H1 (cell line): ENCODE measurements at regions of chr12 and their contacts with region 1.

Region 1: DNA sequence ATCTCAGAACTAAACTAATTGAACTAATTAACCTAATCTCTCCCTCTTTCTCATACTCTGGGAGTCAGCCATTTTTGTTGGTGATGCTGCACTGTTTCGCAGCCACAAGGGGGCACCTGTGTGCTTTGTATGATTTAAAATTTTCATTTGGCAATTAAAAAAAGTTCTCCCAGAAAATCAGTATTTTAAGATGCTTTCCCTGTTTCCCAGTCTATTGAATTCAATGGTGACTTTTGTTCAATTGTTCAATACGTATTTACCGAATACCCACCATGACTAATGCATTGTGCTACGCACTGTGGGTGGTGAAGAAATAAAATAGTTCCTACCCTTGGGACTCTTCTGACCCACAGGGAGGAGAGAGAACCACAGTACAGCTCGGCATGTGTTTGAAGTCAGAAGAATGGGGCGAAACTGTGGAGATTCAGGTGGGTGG is 63.7 kb downstream of the ZNF664 start:
- DNase-seq: peak in 1 of 2 experiments; percentile 61
- H3K4me3 ChIP-seq: no peak overlapping the region
- H3K27ac ChIP-seq: no peak overlapping the region
- H3K4me1 ChIP-seq: peaks cover 0 to 7% (median 0%) of the 10 kb centered on the region in 4 experiments; a peak in 2 of 7 replicates
- H3K27me3 ChIP-seq: no peaks in the 10 kb centered on the region
- CTCF ChIP-seq: peak; percentile 58 to 80 (median 67); a peak in 3 of 4 replicates
- EP300 ChIP-seq: no peak
- POLR2A ChIP-seq: no peak
- RAD21 ChIP-seq: peak; percentile 89 to 90

Region 2: GRCh38 chr12:123897221-123897620 is 139.5 kb before region 1 on chr12:
- CTCF ChIA-PET with region 1: no interaction called
- POLR2A ChIA-PET with region 1: no interaction called
- DNase-seq: no peak
- H3K4me3 ChIP-seq: no peak overlapping the region
- H3K27ac ChIP-seq: no peak overlapping the region
- H3K4me1 ChIP-seq: peaks cover 0 to 7% (median 4%) of the 10 kb centered on the region in 4 experiments; a peak in 3 of 7 replicates
- H3K27me3 ChIP-seq: 0 out of 7 replicates have a peak, but pooled peaks cover 0 to 5% (median 0%) of the 10 kb centered on the region in 4 experiments
- CTCF ChIP-seq: no peak
- EP300 ChIP-seq: no peak
- POLR2A ChIP-seq: no peak
- RAD21 ChIP-seq: no peak

Region 3: DNA sequence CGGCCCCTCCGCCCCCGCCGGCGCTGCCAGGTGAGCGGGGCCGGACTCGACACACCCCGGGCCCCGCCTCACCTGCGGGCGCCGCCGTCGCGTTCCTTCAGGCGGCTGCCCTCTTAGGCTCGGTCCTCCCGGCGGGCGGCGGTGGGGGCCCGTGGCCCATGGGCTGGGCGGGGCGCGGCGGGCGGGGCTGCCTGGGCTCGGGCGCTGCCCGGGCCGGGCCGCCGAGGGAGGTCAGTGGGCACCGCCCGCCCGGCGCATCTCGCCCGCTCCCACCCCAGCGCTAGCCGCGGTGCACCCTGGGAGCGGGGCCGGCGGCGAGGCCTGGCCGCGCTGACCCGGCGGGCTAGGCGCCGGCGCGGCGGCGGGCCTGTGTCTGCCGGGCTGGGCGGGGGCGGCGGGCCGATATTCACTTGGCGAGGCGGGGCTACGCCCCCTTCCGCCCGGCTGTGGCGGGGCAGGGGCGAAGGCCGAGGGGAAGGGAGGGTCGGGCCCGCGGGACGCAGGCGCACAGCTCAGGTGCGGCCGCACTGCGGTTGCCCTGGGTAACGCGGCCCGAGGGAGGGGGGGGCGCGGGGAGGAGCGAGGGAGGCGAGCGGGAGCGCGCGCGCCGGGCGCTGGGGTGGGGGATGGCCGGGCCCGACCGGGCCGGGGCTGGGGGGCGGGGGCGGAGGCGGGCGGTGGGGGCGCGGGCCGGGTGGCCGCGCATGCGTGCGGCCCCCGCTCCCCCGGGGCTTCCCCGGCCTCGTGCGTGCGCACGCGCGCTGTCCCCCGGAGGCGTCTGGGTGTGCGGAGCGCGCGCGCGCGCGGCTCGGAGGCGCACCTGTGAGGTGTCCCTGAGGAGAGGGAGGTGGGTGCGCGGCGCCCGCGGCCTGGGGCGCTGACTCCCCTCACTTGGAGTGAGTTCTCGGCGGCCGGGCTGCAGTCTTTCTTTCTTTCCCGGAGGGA is 64.0 kb before region 1 on chr12 and contains the starts of genes CCDC92 and ZNF664:
- CTCF ChIA-PET with region 1: no interaction called
- POLR2A ChIA-PET with region 1: no interaction called
- DNase-seq: peak; percentile 82 to 94
- H3K4me3 ChIP-seq: peak within 1 kb of the TSS; percentile 57 to 86 (median 70)
- H3K27ac ChIP-seq: no peak within 1 kb of the TSS; the same call in 1 of the 2 replicates
- H3K4me1 ChIP-seq: peaks cover 3 to 8% (median 5%) of the 10 kb centered on the region in 4 experiments; a peak in 6 of 7 replicates
- H3K27me3 ChIP-seq: peaks cover 35 to 60% (median 52%) of the 10 kb centered on the region in 4 experiments
- CTCF ChIP-seq: peak; percentile 34 to 36 (median 35); a peak in 2 of 4 replicates
- EP300 ChIP-seq: no peak
- POLR2A ChIP-seq: peak in 1 of 2 experiments; percentile 48; a peak in 2 of 3 replicates
- RAD21 ChIP-seq: no peak; a peak in 1 of 4 replicates
- total RNA-seq, gene CCDC92: 0.43 and 0.73 TPM in 2 replicates
- total RNA-seq, gene ZNF664: 41.7 and 51.4 TPM in 2 replicates

Region 4: GRCh38 chr12:124053851-124054250 is 17.2 kb after region 1 on chr12:
- CTCF ChIA-PET with region 1: interaction called, 29 read pairs
- POLR2A ChIA-PET with region 1: no interaction called
- DNase-seq: peak; percentile 61 to 63
- H3K4me3 ChIP-seq: no peak overlapping the region
- H3K27ac ChIP-seq: no peak overlapping the region
- H3K4me1 ChIP-seq: no peaks in the 10 kb centered on the region
- H3K27me3 ChIP-seq: no peaks in the 10 kb centered on the region
- CTCF ChIP-seq: peak; percentile 75 to 83 (median 80)
- EP300 ChIP-seq: no peak
- POLR2A ChIP-seq: no peak
- RAD21 ChIP-seq: peak; percentile 98 to 99

Region 5: DNA sequence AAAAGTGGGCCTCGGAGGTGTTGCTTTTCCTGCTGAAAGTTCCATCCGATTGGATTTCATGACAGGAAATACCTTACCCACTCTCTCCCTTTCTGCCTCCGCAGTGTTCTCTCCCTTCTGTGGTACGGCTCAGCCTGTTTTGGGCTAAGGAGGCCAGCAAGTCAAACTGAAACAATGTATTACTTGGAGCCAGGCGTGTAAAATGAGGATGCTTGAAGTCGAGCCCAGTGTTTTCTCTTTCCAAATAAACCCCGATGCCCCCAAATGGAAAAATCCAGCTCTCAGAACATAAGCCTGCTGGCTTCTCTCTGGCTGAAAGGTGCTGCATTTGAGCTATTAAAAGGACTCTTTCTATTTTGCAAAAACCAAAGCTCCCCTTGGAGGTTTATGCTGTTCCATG is 61.0 kb after region 1 on chr12:
- CTCF ChIA-PET with region 1: no interaction called
- POLR2A ChIA-PET with region 1: no interaction called
- DNase-seq: no peak
- H3K4me3 ChIP-seq: no peak overlapping the region
- H3K27ac ChIP-seq: no peak overlapping the region
- H3K4me1 ChIP-seq: no peaks in the 10 kb centered on the region; a peak in 2 of 7 replicates
- H3K27me3 ChIP-seq: no peaks in the 10 kb centered on the region; a peak in 1 of 7 replicates
- CTCF ChIP-seq: no peak
- EP300 ChIP-seq: no peak
- POLR2A ChIP-seq: no peak
- RAD21 ChIP-seq: no peak

Region 6: GRCh38 chr12:124217508-124218237 is 181.0 kb after region 1 on chr12:
- CTCF ChIA-PET with region 1: interaction called, 12 read pairs
- POLR2A ChIA-PET with region 1: no interaction called
- DNase-seq: no peak
- H3K4me3 ChIP-seq: no peak overlapping the region
- H3K27ac ChIP-seq: no peak overlapping the region
- H3K4me1 ChIP-seq: peaks cover 0 to 3% (median 0%) of the 10 kb centered on the region in 4 experiments; a peak in 1 of 7 replicates
- H3K27me3 ChIP-seq: no peaks in the 10 kb centered on the region
- CTCF ChIP-seq: no peak
- EP300 ChIP-seq: no peak
- POLR2A ChIP-seq: no peak
- RAD21 ChIP-seq: no peak

Region 7: GRCh38 chr12:124302807-124303578 is 266.3 kb after region 1 on chr12:
- CTCF ChIA-PET with region 1: interaction called, 21 read pairs
- POLR2A ChIA-PET with region 1: no interaction called
- DNase-seq: no peak
- H3K4me3 ChIP-seq: no peak overlapping the region
- H3K27ac ChIP-seq: no peak overlapping the region
- H3K4me1 ChIP-seq: peaks cover 0 to 4% (median 2%) of the 10 kb centered on the region in 4 experiments; a peak in 3 of 7 replicates
- H3K27me3 ChIP-seq: peaks cover 0 to 2% (median 0%) of the 10 kb centered on the region in 4 experiments; a peak in 1 of 7 replicates
- CTCF ChIP-seq: peak in 1 of 3 experiments; percentile 13; a peak in 1 of 4 replicates
- EP300 ChIP-seq: no peak
- POLR2A ChIP-seq: no peak
- RAD21 ChIP-seq: no peak; a peak in 1 of 4 replicates

Region 8: GRCh38 chr12:124321040-124321481 is 284.4 kb after region 1 on chr12:
- CTCF ChIA-PET with region 1: interaction called, 25 read pairs
- POLR2A ChIA-PET with region 1: interaction called, 6 read pairs
- DNase-seq: peak; percentile 33 to 99
- H3K4me3 ChIP-seq: no peak overlapping the region
- H3K27ac ChIP-seq: no peak overlapping the region
- H3K4me1 ChIP-seq: peaks cover 6 to 21% (median 14%) of the 10 kb centered on the region in 4 experiments
- H3K27me3 ChIP-seq: no peaks in the 10 kb centered on the region; a peak in 1 of 7 replicates
- CTCF ChIP-seq: peak; percentile 92 to 96 (median 95)
- EP300 ChIP-seq: no peak
- POLR2A ChIP-seq: no peak
- RAD21 ChIP-seq: peak; percentile 96 to 97